Posterior vena cava (tissue), 2 donors: ENCODE measurements at regions of chr1 and their contacts with region 1.

Region 1: GRCh38 chr1:44237721-44238457 is 24.6 kb downstream of the DMAP1 start:
- DNase-seq: peak; percentile 87

Region 2: GRCh38 chr1:43253173-43253572 is 984.7 kb before region 1 on chr1:
- intact Hi-C with region 1: no loop called
- DNase-seq: peak; percentile 32

Region 3: GRCh38 chr1:44318097-44319088 is 80.5 kb after region 1 on chr1:
- intact Hi-C with region 1: loop called in 1 of 2 experiments (anchors 10 kb)
- DNase-seq: no peak